PC-3 (cell line): ENCODE measurements at regions of chr14 and their contacts with region 1.

Region 1: GRCh38 chr14:63388763-63389431 is 70.2 kb upstream of the GPHB5 start:
- DNase-seq: peak; percentile 78
- ATAC-seq: peak; percentile 96
- H3K4me3 ChIP-seq: no peak overlapping the region
- H3K27ac ChIP-seq: no peak overlapping the region
- H3K4me1 ChIP-seq: no peaks in the 10 kb centered on the region
- H3K27me3 ChIP-seq: no peaks in the 10 kb centered on the region
- CTCF ChIP-seq: peak; percentile 98

Region 2: DNA sequence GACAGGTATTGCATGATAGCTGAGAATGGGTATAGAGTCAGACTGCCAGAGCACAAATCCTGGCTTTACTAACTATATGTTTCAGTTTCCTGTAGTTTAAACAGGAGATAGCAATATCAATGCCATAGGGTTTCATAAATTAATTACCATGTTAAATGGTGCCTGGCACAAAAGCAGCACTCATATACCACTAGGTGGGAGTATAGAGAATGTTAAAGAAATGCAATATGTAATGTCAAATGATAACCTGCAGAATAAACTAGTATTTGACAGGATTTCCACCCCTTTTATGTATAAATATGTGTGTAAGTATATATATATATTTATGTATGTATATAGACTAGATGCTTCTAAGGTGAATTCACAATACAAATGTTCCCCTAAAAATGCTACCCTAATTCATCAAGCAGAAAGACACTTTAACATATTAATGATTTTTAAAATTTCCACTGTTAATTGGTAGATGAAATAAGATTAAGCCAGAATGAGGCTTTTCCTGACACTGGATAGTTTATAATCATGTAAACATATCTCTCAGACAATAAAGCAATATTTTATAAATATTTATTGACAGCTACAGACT is 244.1 kb after region 1 on chr14:
- CTCF ChIA-PET with region 1: interaction called, 13 read pairs
- POLR2A ChIA-PET with region 1: no interaction called
- intact Hi-C with region 1: loop called (anchors 1 kb)
- DNase-seq: peak; percentile 71
- ATAC-seq: peak; percentile 88
- H3K4me3 ChIP-seq: no peak overlapping the region
- H3K27ac ChIP-seq: no peak overlapping the region
- H3K4me1 ChIP-seq: 0 out of 2 replicates have a peak, but pooled peaks cover 4% of the 10 kb centered on the region
- H3K27me3 ChIP-seq: no peaks in the 10 kb centered on the region
- CTCF ChIP-seq: peak; percentile 82

Region 3: DNA sequence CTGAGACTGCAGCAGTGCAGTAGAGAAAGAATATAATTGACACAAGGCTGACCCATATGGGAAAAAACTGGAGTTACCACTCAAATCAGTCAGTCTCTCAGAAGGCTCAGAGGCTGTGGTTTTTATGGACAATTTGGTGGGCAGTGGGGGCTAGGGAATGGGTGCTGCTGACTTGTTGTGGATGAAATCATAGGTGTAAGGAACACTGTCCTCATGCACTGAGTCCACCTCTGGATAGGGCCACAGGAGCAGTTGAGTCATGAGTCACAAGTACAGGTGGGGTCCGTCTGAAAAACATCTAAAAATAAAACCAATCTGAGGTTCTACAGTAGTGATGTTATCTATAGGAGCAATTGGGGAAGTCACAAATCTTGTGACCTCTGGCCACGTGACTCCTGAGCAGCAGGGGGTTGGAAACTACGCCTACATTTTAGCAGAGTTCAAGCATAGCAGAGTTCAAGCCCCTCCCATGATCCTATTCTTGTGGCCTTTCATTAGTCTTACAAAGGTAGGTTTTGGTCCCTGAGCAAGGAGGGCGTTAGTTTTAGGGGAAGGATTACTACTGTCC is 357.0 kb after region 1 on chr14:
- CTCF ChIA-PET with region 1: interaction called, 14 read pairs
- POLR2A ChIA-PET with region 1: no interaction called
- intact Hi-C with region 1: no loop called
- DNase-seq: no peak
- ATAC-seq: peak; percentile 50
- H3K4me3 ChIP-seq: no peak overlapping the region
- H3K27ac ChIP-seq: no peak overlapping the region
- H3K4me1 ChIP-seq: no peaks in the 10 kb centered on the region
- H3K27me3 ChIP-seq: no peaks in the 10 kb centered on the region
- CTCF ChIP-seq: no peak

Region 4: GRCh38 chr14:63986789-63987533 is 598.1 kb after region 1 on chr14:
- CTCF ChIA-PET with region 1: no interaction called
- POLR2A ChIA-PET with region 1: no interaction called
- intact Hi-C with region 1: no loop called
- DNase-seq: peak; percentile 19
- ATAC-seq: peak; percentile 64
- H3K4me3 ChIP-seq: no peak overlapping the region
- H3K27ac ChIP-seq: no peak overlapping the region
- H3K4me1 ChIP-seq: no peaks in the 10 kb centered on the region
- H3K27me3 ChIP-seq: no peaks in the 10 kb centered on the region
- CTCF ChIP-seq: no peak